Caco-2 (cell line): ENCODE measurements at regions of chr4 and their contacts with region 1.

Region 1: GRCh38 chr4:76526585-76526990 is 91.6 kb downstream of the SHROOM3 start:
- DNase-seq: peak; percentile 57 to 59
- H3K4me3 ChIP-seq: no peak overlapping the region
- H3K4me3 Mint-ChIP-seq: peak overlapping the region; percentile 35
- H3K27ac Mint-ChIP-seq: peak overlapping the region; percentile 94
- H3K4me1 ChIP-seq: peaks cover 18% of the 10 kb centered on the region
- H3K4me1 Mint-ChIP-seq: peaks cover 35% of the 10 kb centered on the region
- H3K27me3 ChIP-seq: no peaks in the 10 kb centered on the region
- H3K27me3 Mint-ChIP-seq: no peaks in the 10 kb centered on the region
- CTCF ChIP-seq: no peak

Region 2: GRCh38 chr4:76546282-76547171 is 19.9 kb after region 1 on chr4:
- CTCF ChIA-PET with region 1: no interaction called
- POLR2A ChIA-PET with region 1: no interaction called
- intact Hi-C with region 1: loop called (anchors 2 kb)
- DNase-seq: no peak
- H3K4me3 ChIP-seq: no peak overlapping the region
- H3K4me3 Mint-ChIP-seq: no peak overlapping the region
- H3K27ac Mint-ChIP-seq: peak overlapping the region; percentile 69
- H3K4me1 ChIP-seq: peaks cover 25% of the 10 kb centered on the region
- H3K4me1 Mint-ChIP-seq: peaks cover 29% of the 10 kb centered on the region
- H3K27me3 ChIP-seq: no peaks in the 10 kb centered on the region
- H3K27me3 Mint-ChIP-seq: no peaks in the 10 kb centered on the region
- CTCF ChIP-seq: no peak

Region 3: DNA sequence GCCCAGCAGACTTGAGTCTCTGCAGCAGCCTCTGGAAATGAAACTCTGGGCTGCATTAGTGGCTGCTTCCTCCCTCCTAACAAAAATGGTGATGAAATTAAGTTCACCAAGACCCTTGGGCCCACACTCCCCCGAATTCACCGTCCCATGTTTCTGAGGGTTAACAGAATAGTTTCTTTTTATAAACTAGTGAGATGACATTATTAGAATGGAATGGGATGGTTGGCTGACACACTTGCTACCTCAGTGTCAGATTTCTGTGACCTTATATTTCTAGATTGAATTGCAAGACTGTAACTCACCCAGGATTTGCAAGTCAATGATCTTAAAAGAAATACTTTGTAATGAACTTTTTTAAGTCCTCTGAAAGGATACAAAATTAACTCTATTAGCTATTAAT is 35.6 kb after region 1 on chr4:
- CTCF ChIA-PET with region 1: interaction called, 8 read pairs
- POLR2A ChIA-PET with region 1: no interaction called
- intact Hi-C with region 1: loop called (anchors 2 kb)
- DNase-seq: no peak
- H3K4me3 ChIP-seq: no peak overlapping the region
- H3K4me3 Mint-ChIP-seq: no peak overlapping the region
- H3K27ac Mint-ChIP-seq: no peak overlapping the region
- H3K4me1 ChIP-seq: peaks cover 17% of the 10 kb centered on the region
- H3K4me1 Mint-ChIP-seq: peaks cover 7% of the 10 kb centered on the region
- H3K27me3 ChIP-seq: no peaks in the 10 kb centered on the region
- H3K27me3 Mint-ChIP-seq: no peaks in the 10 kb centered on the region
- CTCF ChIP-seq: no peak